Endothelial cell of umbilical vein (primary cell): ENCODE measurements at regions of chr2 and their contacts with region 1.

Region 1: GRCh38 chr2:66509326-66509811 is 74.4 kb downstream of the MEIS1 start:
- DNase-seq: peak; percentile 88
- H3K4me3 ChIP-seq: peak overlapping the region in 1 of 3 experiments; percentile 28
- H3K27ac ChIP-seq: peak overlapping the region; percentile 91
- H3K4me1 ChIP-seq: peaks cover 36% of the 10 kb centered on the region
- H3K27me3 ChIP-seq: no peaks in the 10 kb centered on the region
- CTCF ChIP-seq: no peak
- POLR2A ChIP-seq: no peak

Region 2: GRCh38 chr2:66305718-66306117 is 203.7 kb before region 1 on chr2:
- CTCF ChIA-PET with region 1: no interaction called
- POLR2A ChIA-PET with region 1: no interaction called
- dilution Hi-C with region 1: no loop called
- intact Hi-C with region 1: no loop called
- DNase-seq: peak; percentile 5
- H3K4me3 ChIP-seq: no peak overlapping the region
- H3K27ac ChIP-seq: no peak overlapping the region
- H3K4me1 ChIP-seq: no peaks in the 10 kb centered on the region
- H3K27me3 ChIP-seq: no peaks in the 10 kb centered on the region
- CTCF ChIP-seq: no peak
- POLR2A ChIP-seq: no peak

Region 3: GRCh38 chr2:66481100-66481549 is 28.2 kb before region 1 on chr2:
- CTCF ChIA-PET with region 1: interaction called, 3 read pairs
- POLR2A ChIA-PET with region 1: no interaction called
- dilution Hi-C with region 1: no loop called
- intact Hi-C with region 1: loop called (anchors 1 kb)
- DNase-seq: peak; percentile 93
- H3K4me3 ChIP-seq: peak overlapping the region in 1 of 3 experiments; percentile 5
- H3K27ac ChIP-seq: peak overlapping the region; percentile 90
- H3K4me1 ChIP-seq: peaks cover 27% of the 10 kb centered on the region
- H3K27me3 ChIP-seq: no peaks in the 10 kb centered on the region
- CTCF ChIP-seq: no peak
- POLR2A ChIP-seq: no peak

Region 4: DNA sequence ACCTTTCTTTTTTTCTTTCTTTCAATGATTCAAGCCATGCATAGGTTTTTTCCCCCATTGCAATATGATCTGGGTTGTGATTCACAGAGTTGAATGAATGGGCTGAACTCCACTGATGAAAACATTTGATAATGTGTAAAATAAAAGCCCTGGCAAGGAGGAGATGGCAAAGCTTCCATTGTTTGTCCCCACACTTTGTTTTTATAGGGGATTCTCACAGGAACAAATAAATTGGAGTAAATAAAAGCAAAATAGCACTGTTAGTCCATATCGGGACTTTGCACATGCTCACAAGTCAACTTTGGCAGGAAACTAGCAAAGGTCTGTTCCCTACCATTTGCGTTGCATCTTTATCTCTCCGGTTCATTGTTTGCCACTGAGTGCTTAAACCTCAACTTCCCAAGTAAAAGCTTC is 18.8 kb before region 1 on chr2:
- CTCF ChIA-PET with region 1: interaction called, 11 read pairs
- POLR2A ChIA-PET with region 1: interaction called, 3 read pairs
- dilution Hi-C with region 1: no loop called
- intact Hi-C with region 1: loop called (anchors 1 kb)
- DNase-seq: peak; percentile 88
- H3K4me3 ChIP-seq: no peak overlapping the region
- H3K27ac ChIP-seq: peak overlapping the region; percentile 59
- H3K4me1 ChIP-seq: peaks cover 28% of the 10 kb centered on the region
- H3K27me3 ChIP-seq: no peaks in the 10 kb centered on the region
- CTCF ChIP-seq: no peak
- POLR2A ChIP-seq: no peak

Region 5: GRCh38 chr2:66561645-66562303 is 52.4 kb after region 1 on chr2:
- CTCF ChIA-PET with region 1: no interaction called
- POLR2A ChIA-PET with region 1: no interaction called
- dilution Hi-C with region 1: no loop called
- intact Hi-C with region 1: loop called (anchors 5 kb)
- DNase-seq: peak; percentile 34
- H3K4me3 ChIP-seq: no peak overlapping the region
- H3K27ac ChIP-seq: peak overlapping the region; percentile 55
- H3K4me1 ChIP-seq: peaks cover 20% of the 10 kb centered on the region
- H3K27me3 ChIP-seq: no peaks in the 10 kb centered on the region
- CTCF ChIP-seq: no peak
- POLR2A ChIP-seq: no peak

Region 6: DNA sequence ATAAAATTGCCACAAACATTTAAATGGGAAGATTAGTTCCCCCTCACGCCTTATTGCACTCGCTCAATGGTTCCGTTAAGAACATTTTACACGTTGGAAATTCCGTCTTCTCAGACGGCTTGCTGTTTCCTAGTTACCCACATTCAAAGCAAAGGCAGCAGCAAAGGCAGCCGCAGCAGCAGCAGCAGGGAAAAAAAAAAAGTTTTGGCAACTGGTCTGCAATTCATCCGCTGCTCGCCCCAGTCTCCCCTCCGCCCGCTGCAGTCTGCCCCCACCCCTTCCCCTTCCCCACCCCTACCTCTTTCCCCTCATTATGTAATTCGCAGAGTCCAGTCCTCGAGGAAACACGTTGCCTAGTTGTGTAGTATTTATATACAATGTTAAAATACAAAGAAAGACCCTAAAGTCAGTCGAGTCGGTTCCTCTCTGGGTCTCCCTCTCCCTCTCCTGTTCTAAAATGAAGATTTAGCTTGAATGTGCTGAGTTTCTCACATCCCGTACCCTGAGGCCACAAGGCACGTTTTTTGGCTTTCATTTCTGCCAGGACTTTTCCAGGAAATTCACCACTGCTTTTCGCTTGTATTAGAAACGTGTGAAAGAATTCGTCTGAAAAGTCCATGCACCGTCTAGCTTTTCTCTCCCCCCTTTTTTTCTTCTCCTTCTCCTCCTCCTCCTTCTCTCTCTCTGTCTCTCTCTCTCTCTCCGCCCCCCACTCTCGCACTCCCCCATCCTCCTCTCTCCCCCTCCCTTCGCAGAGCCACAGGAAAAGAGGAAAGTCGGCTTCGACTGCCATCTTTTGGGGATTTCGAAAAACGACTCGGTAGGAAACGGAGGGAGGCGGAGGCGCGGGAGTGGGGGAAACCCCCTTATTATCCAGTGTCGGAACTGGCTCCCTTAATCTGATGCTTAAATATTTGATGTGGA is 65.6 kb after region 1 on chr2:
- CTCF ChIA-PET with region 1: interaction called, 5 read pairs
- POLR2A ChIA-PET with region 1: no interaction called
- dilution Hi-C with region 1: no loop called
- intact Hi-C with region 1: loop called (anchors 1 kb)
- DNase-seq: peak; percentile 81
- H3K4me3 ChIP-seq: peak overlapping the region; percentile 56 to 92 (median 85)
- H3K27ac ChIP-seq: peak overlapping the region; percentile 74
- H3K4me1 ChIP-seq: peaks cover 18% of the 10 kb centered on the region
- H3K27me3 ChIP-seq: peaks cover 32 to 38% of the 10 kb centered on the region in 2 experiments
- CTCF ChIP-seq: peak; percentile 45 to 60
- POLR2A ChIP-seq: no peak